Ovary (tissue), 10 donors: ENCODE measurements at regions of chr2 and their contacts with region 1.

Region 1: GRCh38 chr2:159506764-159507440 is 109.4 kb downstream of the BAZ2B start:
- DNase-seq: no peak
- H3K4me3 ChIP-seq: no peak overlapping the region
- H3K27ac ChIP-seq: no peak overlapping the region
- H3K4me1 ChIP-seq: peaks cover 4% of the 10 kb centered on the region
- H3K27me3 ChIP-seq: no peaks in the 10 kb centered on the region
- CTCF ChIP-seq: no peak
- EP300 ChIP-seq: no peak
- POLR2A ChIP-seq: no peak

Region 2: DNA sequence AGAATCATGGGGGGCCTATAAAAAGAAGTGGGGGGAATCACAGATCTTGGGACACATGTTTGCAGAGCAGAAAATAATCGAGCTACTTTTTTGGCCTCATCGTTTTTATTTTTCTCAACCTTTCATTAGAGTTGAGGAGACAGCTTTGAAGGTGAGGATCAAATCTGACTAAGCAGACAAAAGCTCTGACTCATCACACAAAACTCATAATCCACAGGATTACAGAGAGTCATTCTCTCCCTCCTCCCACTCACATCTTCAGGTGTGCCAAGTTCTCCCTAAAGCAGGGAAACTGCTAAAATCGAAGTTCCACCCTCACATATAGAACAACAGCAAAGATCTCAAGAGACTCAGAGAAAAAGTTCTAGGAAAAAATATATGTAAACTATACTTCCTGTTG is 93.8 kb after region 1 on chr2:
- intact Hi-C with region 1: loop called in 1 of 4 experiments (anchors 10 kb)
- DNase-seq: no peak
- H3K4me3 ChIP-seq: no peak overlapping the region
- H3K27ac ChIP-seq: no peak overlapping the region
- H3K4me1 ChIP-seq: peaks cover 2% of the 10 kb centered on the region
- H3K27me3 ChIP-seq: no peaks in the 10 kb centered on the region
- CTCF ChIP-seq: no peak
- EP300 ChIP-seq: no peak
- POLR2A ChIP-seq: no peak